CD4-positive, alpha-beta T cell (primary cell): ENCODE measurements at regions of chr6 and their contacts with region 1.

Region 1: DNA sequence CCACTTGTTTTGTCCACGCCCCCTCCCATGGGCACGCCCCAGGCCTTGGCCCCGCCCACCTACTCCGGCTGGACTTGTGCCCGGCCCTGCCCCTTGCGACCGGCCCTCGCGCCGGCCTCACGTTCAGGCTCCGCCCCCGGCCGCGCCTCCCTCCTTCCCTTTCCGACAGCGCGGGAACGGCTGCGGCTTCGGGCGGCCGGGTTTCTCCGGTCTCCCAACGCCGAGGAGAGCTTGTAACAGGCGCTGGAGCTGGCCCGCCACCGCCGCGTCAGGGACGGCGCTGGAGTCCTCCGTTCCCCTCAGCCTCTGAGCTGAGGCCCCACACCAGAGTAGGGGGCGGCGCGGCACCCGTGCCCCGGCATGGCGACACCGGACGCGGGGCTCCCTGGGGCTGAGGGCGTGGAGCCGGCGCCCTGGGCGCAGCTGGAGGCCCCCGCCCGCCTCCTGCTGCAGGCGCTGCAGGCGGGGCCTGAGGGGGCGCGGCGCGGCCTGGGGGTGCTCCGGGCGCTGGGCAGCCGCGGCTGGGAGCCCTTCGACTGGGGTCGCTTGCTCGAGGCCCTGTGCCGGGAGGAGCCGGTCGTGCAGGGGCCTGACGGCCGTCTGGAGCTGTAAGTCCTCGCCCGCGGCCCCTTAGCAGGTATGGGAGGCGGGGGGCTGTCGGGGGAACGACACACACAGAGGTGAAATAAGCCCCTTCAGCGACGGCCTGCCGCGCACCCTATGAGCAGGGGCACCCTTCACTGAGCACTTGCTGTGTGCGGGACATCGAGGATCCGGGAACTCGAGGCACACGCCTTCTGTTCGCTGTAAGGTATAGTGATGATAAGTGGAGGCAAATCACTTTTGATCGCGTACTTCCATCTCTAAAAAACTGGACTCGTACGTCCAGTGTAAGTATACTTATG is at the start of gene FANCE:
- DNase-seq: peak; percentile 67 to 95 (median 84)
- ATAC-seq: peak; percentile 75
- H3K4me3 ChIP-seq: peak within 1 kb of the TSS; percentile 68
- H3K4me3 Mint-ChIP-seq: peak within 1 kb of the TSS; percentile 89
- H3K27ac ChIP-seq: peak within 1 kb of the TSS; percentile 27 to 55
- H3K27ac Mint-ChIP-seq: peak within 1 kb of the TSS; percentile 77
- H3K4me1 ChIP-seq: peaks cover 34% of the 10 kb centered on the region
- H3K4me1 Mint-ChIP-seq: peaks cover 43% of the 10 kb centered on the region
- H3K27me3 ChIP-seq: no peaks in the 10 kb centered on the region
- H3K27me3 Mint-ChIP-seq: no peaks in the 10 kb centered on the region
- CTCF ChIP-seq: no peak
- total RNA-seq, gene FANCE: 1.6 to 1.7 TPM

Region 2: DNA sequence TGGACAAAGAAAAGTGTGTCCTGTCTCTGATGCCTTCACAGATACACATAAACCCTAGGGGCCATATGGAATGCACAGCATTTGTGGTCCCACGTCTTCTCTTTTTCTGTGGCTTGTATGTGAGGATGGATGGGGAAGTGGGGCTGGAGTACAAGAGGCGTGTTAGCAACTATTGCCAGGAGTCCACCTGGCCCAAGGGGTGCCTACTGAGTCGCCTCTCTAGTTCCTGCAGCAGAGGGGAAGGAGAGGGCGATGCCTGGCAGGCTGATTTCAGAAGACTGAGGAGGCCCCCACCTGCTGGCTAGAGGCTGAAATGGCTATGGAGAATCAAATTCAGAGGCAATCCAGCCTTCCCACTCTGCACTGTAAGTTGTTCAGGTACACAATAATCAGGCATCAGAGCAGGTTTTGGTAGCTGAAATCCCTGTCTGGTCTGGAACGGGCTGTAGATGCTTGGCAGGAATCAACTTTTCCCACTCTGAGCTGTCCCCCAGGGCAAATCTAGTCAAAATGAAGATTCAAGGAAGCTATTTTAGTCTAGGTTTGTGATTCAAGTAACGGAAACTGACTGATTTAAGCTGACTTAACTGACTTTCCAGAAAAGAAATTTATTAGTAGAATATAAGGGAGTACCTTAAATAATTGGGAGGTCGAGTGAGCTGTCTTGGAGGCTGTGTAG is 125.0 kb before region 1 on chr6:
- CTCF ChIA-PET with region 1: interaction called, 12 read pairs
- POLR2A ChIA-PET with region 1: interaction called, 11 read pairs
- intact Hi-C with region 1: no loop called
- DNase-seq: peak; percentile 65 to 87 (median 75)
- ATAC-seq: peak; percentile 77
- H3K4me3 ChIP-seq: no peak overlapping the region
- H3K4me3 Mint-ChIP-seq: peak overlapping the region; percentile 28
- H3K27ac ChIP-seq: peak overlapping the region in 1 of 2 donors; percentile 30
- H3K27ac Mint-ChIP-seq: peak overlapping the region; percentile 86
- H3K4me1 ChIP-seq: peaks cover 23% of the 10 kb centered on the region
- H3K4me1 Mint-ChIP-seq: peaks cover 26% of the 10 kb centered on the region
- H3K27me3 ChIP-seq: no peaks in the 10 kb centered on the region
- H3K27me3 Mint-ChIP-seq: no peaks in the 10 kb centered on the region
- CTCF ChIP-seq: peak; percentile 78

Region 3: GRCh38 chr6:35403544-35404442 is 48.6 kb before region 1 on chr6:
- CTCF ChIA-PET with region 1: no interaction called
- POLR2A ChIA-PET with region 1: no interaction called
- intact Hi-C with region 1: no loop called
- DNase-seq: no peak
- ATAC-seq: no peak
- H3K4me3 ChIP-seq: no peak overlapping the region
- H3K4me3 Mint-ChIP-seq: no peak overlapping the region
- H3K27ac ChIP-seq: no peak overlapping the region
- H3K27ac Mint-ChIP-seq: peak overlapping the region; percentile 40
- H3K4me1 ChIP-seq: peaks cover 14% of the 10 kb centered on the region
- H3K4me1 Mint-ChIP-seq: peaks cover 5% of the 10 kb centered on the region
- H3K27me3 ChIP-seq: no peaks in the 10 kb centered on the region
- H3K27me3 Mint-ChIP-seq: no peaks in the 10 kb centered on the region
- CTCF ChIP-seq: no peak

Region 4: GRCh38 chr6:35415065-35415991 is 37.1 kb before region 1 on chr6:
- CTCF ChIA-PET with region 1: interaction called, 3 read pairs
- POLR2A ChIA-PET with region 1: interaction called, 4 read pairs
- intact Hi-C with region 1: loop called (anchors 2 to 5 kb)
- DNase-seq: peak in 9 of 14 experiments; percentile 10 to 61 (median 26)
- ATAC-seq: no peak
- H3K4me3 ChIP-seq: no peak overlapping the region
- H3K4me3 Mint-ChIP-seq: no peak overlapping the region
- H3K27ac ChIP-seq: no peak overlapping the region
- H3K27ac Mint-ChIP-seq: peak overlapping the region; percentile 61
- H3K4me1 ChIP-seq: peaks cover 50% of the 10 kb centered on the region
- H3K4me1 Mint-ChIP-seq: peaks cover 52% of the 10 kb centered on the region
- H3K27me3 ChIP-seq: no peaks in the 10 kb centered on the region
- H3K27me3 Mint-ChIP-seq: no peaks in the 10 kb centered on the region
- CTCF ChIP-seq: peak; percentile 15

Region 5: GRCh38 chr6:35468181-35468979 is 15.9 kb after region 1 on chr6 and contains the start of gene RPL10A:
- CTCF ChIA-PET with region 1: interaction called, 27 read pairs
- POLR2A ChIA-PET with region 1: interaction called, 32 read pairs
- intact Hi-C with region 1: loop called in 1 of 2 experiments (anchors 1 kb)
- DNase-seq: peak; percentile 91 to 98 (median 96)
- ATAC-seq: peak; percentile 83
- H3K4me3 ChIP-seq: peak within 1 kb of the TSS; percentile 98
- H3K4me3 Mint-ChIP-seq: peak within 1 kb of the TSS; percentile 99
- H3K27ac ChIP-seq: peak within 1 kb of the TSS; percentile 65 to 92
- H3K27ac Mint-ChIP-seq: peak within 1 kb of the TSS; percentile 100
- H3K4me1 ChIP-seq: peaks cover 49% of the 10 kb centered on the region
- H3K4me1 Mint-ChIP-seq: peaks cover 42% of the 10 kb centered on the region
- H3K27me3 ChIP-seq: no peaks in the 10 kb centered on the region
- H3K27me3 Mint-ChIP-seq: no peaks in the 10 kb centered on the region
- CTCF ChIP-seq: peak; percentile 91
- total RNA-seq, gene RPL10A: 2,453 to 2,464 TPM

Region 6: DNA sequence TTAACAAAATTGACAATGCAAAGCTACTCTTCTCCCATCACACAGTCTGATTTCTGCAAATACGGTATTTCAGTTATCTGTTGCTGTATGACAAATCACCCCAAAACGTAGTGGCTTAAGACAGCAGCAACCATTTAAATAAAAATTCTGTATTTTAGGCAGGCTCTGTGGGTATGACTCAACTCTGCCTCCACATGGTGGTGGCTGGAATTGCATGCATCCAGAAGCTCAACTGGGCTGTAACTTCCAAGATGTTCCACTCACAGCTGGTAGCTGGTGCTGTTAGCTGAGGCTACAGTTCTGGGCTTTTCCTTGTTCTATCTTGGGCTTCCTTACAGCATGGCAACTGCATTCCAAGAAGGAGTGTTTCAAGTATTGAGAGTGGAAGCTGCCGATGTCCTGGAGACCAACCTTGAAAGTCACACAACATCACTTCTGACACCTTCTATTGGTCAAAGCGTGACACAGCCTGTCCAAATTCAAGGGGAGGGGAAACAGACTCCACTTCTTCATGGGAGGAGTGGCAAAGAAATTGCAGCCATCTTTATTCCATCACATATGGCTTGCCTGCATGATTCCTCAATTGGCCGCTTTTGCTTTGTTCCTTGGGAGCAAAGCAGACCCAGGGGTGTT is 100.0 kb after region 1 on chr6:
- CTCF ChIA-PET with region 1: interaction called, 5 read pairs
- POLR2A ChIA-PET with region 1: no interaction called
- intact Hi-C with region 1: loop called in 1 of 2 experiments (anchors 5 kb)
- DNase-seq: peak; percentile 45 to 82 (median 58)
- ATAC-seq: peak; percentile 85
- H3K4me3 ChIP-seq: no peak overlapping the region
- H3K4me3 Mint-ChIP-seq: no peak overlapping the region
- H3K27ac ChIP-seq: no peak overlapping the region
- H3K27ac Mint-ChIP-seq: no peak overlapping the region
- H3K4me1 ChIP-seq: no peaks in the 10 kb centered on the region
- H3K4me1 Mint-ChIP-seq: peaks cover 8% of the 10 kb centered on the region
- H3K27me3 ChIP-seq: no peaks in the 10 kb centered on the region
- H3K27me3 Mint-ChIP-seq: no peaks in the 10 kb centered on the region
- CTCF ChIP-seq: peak; percentile 97